ENCODE measurements at regions of chr2 and their contacts with region 1.

Region 1: DNA sequence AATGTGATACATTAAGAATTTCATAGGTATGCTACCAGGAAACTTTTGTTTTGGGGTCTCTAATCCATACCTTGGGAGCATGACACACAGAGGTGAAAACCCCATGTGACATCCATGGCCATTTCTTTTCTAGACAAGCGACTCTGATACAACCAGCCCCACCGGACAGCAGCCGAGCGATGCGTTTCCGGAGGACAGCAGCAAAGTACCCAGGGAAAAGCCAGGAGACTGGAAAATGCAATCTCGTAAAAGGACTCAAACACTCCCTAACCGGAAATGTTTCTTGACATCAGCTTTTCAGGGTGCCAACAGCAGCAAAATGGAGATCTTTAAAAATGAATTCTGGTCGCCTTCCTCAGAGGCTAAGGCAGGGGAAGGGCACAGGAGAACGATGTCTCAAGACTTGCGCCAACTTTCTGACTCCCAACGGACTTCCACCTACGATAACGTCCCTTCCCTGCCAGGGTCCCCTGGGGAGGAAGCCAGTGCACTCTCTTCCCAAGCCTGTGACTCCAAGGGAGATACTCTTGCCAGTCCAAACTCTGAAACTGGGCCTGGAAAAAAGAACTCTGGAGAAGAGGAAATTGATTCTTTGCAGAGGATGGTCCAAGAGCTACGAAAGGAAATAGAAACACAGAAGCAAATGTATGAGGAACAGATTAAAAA is 48.9 kb downstream of the BMP10 start:
- DNase-seq: no peak
- ATAC-seq: no peak
- H3K4me3 Mint-ChIP-seq: no peak overlapping the region
- H3K27ac Mint-ChIP-seq: peak overlapping the region; percentile 69
- H3K4me1 Mint-ChIP-seq: peaks cover 2% of the 10 kb centered on the region
- H3K27me3 Mint-ChIP-seq: no peaks in the 10 kb centered on the region

Region 2: GRCh38 chr2:68796294-68796905 is 25.9 kb before region 1 on chr2:
- CTCF ChIA-PET with region 1: no interaction called
- POLR2A ChIA-PET with region 1: no interaction called
- intact Hi-C with region 1: no loop called
- DNase-seq: no peak
- ATAC-seq: peak; percentile 86
- H3K4me3 Mint-ChIP-seq: no peak overlapping the region
- H3K27ac Mint-ChIP-seq: peak overlapping the region; percentile 90
- H3K4me1 Mint-ChIP-seq: peaks cover 76% of the 10 kb centered on the region
- H3K27me3 Mint-ChIP-seq: no peaks in the 10 kb centered on the region

Region 3: GRCh38 chr2:68807821-68808266 is 14.5 kb before region 1 on chr2:
- CTCF ChIA-PET with region 1: interaction called, 3 read pairs
- POLR2A ChIA-PET with region 1: no interaction called
- intact Hi-C with region 1: loop called in 1 of 2 experiments (anchors 2 kb)
- DNase-seq: no peak
- ATAC-seq: no peak
- H3K4me3 Mint-ChIP-seq: no peak overlapping the region
- H3K27ac Mint-ChIP-seq: peak overlapping the region; percentile 56
- H3K4me1 Mint-ChIP-seq: peaks cover 36% of the 10 kb centered on the region
- H3K27me3 Mint-ChIP-seq: no peaks in the 10 kb centered on the region

Measured in activated CD4-positive, alpha-beta T cell treated with anti-CD3 and anti-CD28 coated beads for 36 hours (primary cell).